Activated B cell treated with CpG ODN at 0.5 μM for 24 hours (primary cell): ENCODE measurements at regions of chr1 and their contacts with region 1.

Region 1: GRCh38 chr1:54944610-54945544 is 35.6 kb upstream of the TMEM61 start:
- DNase-seq: peak; percentile 23
- ATAC-seq: peak; percentile 54
- H3K4me3 Mint-ChIP-seq: no peak overlapping the region
- H3K27ac Mint-ChIP-seq: no peak overlapping the region
- H3K4me1 Mint-ChIP-seq: peaks cover 5% of the 10 kb centered on the region
- H3K27me3 Mint-ChIP-seq: peaks cover 3% of the 10 kb centered on the region
- CTCF ChIP-seq: no peak

Region 2: GRCh38 chr1:54904476-54905048 is 40.3 kb before region 1 on chr1:
- CTCF ChIA-PET with region 1: no interaction called
- POLR2A ChIA-PET with region 1: no interaction called
- intact Hi-C with region 1: no loop called
- DNase-seq: no peak
- ATAC-seq: no peak
- H3K4me3 Mint-ChIP-seq: no peak overlapping the region
- H3K27ac Mint-ChIP-seq: no peak overlapping the region
- H3K4me1 Mint-ChIP-seq: no peaks in the 10 kb centered on the region
- H3K27me3 Mint-ChIP-seq: peaks cover 27% of the 10 kb centered on the region
- CTCF ChIP-seq: no peak

Region 3: DNA sequence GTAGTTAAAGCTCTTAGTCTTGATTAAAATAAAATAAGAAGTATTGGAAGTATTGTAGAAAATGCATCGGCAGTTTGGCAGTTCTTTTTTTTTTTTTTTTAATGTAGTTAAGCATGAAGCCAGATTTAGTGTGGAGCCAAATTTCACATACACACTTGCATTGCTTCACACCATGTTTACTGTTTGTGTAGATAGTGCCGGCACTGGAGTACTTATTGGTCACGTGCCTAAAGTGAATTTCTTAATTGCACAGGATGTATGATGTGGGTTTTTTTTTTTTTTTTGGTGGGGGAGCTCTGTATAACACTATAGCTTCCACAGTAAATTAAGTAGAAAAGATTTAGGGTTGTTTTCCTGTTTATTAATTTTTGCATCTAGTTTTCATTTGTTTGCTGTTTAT is 14.4 kb after region 1 on chr1:
- CTCF ChIA-PET with region 1: interaction called, 12 read pairs
- POLR2A ChIA-PET with region 1: no interaction called
- intact Hi-C with region 1: no loop called
- DNase-seq: no peak
- ATAC-seq: no peak
- H3K4me3 Mint-ChIP-seq: no peak overlapping the region
- H3K27ac Mint-ChIP-seq: no peak overlapping the region
- H3K4me1 Mint-ChIP-seq: no peaks in the 10 kb centered on the region
- H3K27me3 Mint-ChIP-seq: peaks cover 6% of the 10 kb centered on the region
- CTCF ChIP-seq: no peak

Region 4: GRCh38 chr1:55021965-55022546 is 77.2 kb after region 1 on chr1:
- CTCF ChIA-PET with region 1: interaction called, 24 read pairs
- POLR2A ChIA-PET with region 1: no interaction called
- intact Hi-C with region 1: loop called (anchors 1 kb)
- DNase-seq: peak; percentile 37
- ATAC-seq: peak; percentile 68
- H3K4me3 Mint-ChIP-seq: no peak overlapping the region
- H3K27ac Mint-ChIP-seq: no peak overlapping the region
- H3K4me1 Mint-ChIP-seq: no peaks in the 10 kb centered on the region
- H3K27me3 Mint-ChIP-seq: peaks cover 5% of the 10 kb centered on the region
- CTCF ChIP-seq: peak; percentile 52